Calu3 (cell line): ENCODE measurements at regions of chr2 and their contacts with region 1.

Region 1: GRCh38 chr2:46650556-46651001 is 171.2 kb downstream of the TMEM247 start:
- DNase-seq: peak; percentile 71
- H3K4me3 Mint-ChIP-seq: no peak overlapping the region
- H3K27ac Mint-ChIP-seq: no peak overlapping the region
- H3K4me1 Mint-ChIP-seq: no peaks in the 10 kb centered on the region
- H3K27me3 Mint-ChIP-seq: peaks cover 14% of the 10 kb centered on the region
- CTCF ChIP-seq: peak; percentile 69

Region 2: GRCh38 chr2:46632349-46632748 is 18.2 kb before region 1 on chr2:
- CTCF ChIA-PET with region 1: interaction called, 5 read pairs
- intact Hi-C with region 1: loop called (anchors 1 kb)
- DNase-seq: no peak
- H3K4me3 Mint-ChIP-seq: no peak overlapping the region
- H3K27ac Mint-ChIP-seq: no peak overlapping the region
- H3K4me1 Mint-ChIP-seq: no peaks in the 10 kb centered on the region
- H3K27me3 Mint-ChIP-seq: no peaks in the 10 kb centered on the region
- CTCF ChIP-seq: peak; percentile 25

Region 3: DNA sequence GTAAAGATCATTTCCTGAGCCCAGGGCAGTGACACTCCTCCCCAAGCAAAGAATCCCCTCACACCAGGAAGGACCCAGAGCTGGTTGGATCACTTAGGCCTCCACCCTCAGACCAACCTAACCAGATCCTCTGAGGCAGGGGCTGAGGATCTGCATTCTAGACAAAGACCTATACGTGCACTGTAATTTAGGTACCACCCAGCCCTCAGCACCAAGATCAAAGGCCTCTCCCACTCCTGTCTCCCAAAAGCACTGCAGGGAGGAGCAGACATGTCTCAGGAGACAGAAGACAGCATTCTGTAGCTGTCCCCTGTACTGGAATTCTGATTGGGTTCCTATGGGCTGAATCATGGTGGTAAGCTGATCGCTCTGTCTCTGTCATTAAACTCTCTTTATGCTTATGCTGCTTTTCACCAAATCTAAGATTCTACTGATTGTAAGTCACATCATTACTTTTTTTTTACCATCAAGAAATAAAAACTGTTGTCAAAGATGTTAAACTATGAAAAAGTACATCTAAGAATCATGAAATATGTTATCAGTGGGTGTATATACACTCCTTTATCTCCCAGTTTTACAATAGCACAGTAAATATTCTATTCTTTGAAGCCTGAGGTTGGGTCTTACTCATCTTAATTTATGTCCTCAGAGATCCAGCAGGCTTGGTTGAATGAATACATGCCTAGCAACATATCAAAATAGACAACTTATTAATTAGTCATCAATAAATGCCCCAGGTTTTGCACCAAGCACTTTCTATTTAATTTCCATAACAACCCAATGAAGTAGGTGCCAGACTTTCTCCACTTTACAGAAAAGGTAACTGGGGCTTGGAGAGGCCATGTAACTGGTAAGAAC is 236.7 kb after region 1 on chr2:
- CTCF ChIA-PET with region 1: interaction called, 4 read pairs
- intact Hi-C with region 1: loop called (anchors 5 kb)
- DNase-seq: no peak
- H3K4me3 Mint-ChIP-seq: no peak overlapping the region
- H3K27ac Mint-ChIP-seq: no peak overlapping the region
- H3K4me1 Mint-ChIP-seq: no peaks in the 10 kb centered on the region
- H3K27me3 Mint-ChIP-seq: peaks cover 26% of the 10 kb centered on the region
- CTCF ChIP-seq: no peak